Natural killer cell (primary cell): ENCODE measurements at regions of chr19 and their contacts with region 1.

Region 1: DNA sequence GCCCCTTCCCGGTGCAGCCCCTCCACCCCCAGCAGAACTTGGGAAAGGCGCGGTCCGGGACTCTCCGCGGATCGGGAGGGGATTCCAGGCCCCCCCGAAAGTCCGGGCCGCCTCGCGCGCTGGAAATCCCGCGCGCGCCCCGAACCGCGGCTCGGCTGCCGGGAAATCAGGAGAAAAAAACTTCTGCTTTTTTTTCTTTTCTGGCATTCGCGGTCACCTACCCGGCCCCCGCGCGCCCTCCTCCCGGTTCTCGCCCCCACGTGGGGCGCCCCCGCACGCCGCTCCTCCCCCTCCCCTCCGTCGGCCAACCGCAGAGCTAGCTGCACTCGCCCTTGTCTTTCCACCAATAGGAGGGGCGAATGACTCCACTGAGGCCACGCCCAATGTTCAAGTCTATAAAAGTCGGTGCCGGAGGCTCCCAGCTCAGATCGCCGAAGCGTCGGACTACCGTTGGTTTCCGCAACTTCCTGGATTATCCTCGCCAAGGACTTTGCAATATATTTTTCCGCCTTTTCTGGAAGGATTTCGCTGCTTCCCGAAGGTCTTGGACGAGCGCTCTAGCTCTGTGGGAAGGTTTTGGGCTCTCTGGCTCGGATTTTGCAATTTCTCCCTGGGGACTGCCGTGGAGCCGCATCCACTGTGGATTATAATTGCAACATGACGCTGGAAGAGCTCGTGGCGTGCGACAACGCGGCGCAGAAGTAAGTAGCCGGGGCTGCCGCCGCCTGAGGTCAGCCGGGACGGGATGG is at the start of gene GADD45B:
- DNase-seq: peak; percentile 95 to 98
- ATAC-seq: peak; percentile 59 to 81 (median 70)
- H3K4me3 ChIP-seq: peak within 1 kb of the TSS; percentile 93
- H3K4me3 Mint-ChIP-seq: peak within 1 kb of the TSS; percentile 97
- H3K27ac ChIP-seq: peak within 1 kb of the TSS; percentile 62
- H3K27ac Mint-ChIP-seq: peak within 1 kb of the TSS; percentile 96 to 98
- H3K4me1 ChIP-seq: peaks cover 48% of the 10 kb centered on the region
- H3K4me1 Mint-ChIP-seq: peaks cover 27 to 52% of the 10 kb centered on the region in 2 donors
- H3K27me3 ChIP-seq: no peaks in the 10 kb centered on the region
- H3K27me3 Mint-ChIP-seq: no peaks in the 10 kb centered on the region
- CTCF ChIP-seq: no peak
- total RNA-seq, gene GADD45B: 198 to 247 (median 212) TPM

Region 2: GRCh38 chr19:2552859-2553258 is 77.0 kb after region 1 on chr19:
- intact Hi-C with region 1: loop called (anchors 5 kb)
- DNase-seq: peak in 1 of 2 donors; percentile 87
- ATAC-seq: peak; percentile 79 to 89 (median 87)
- H3K4me3 ChIP-seq: peak overlapping the region; percentile 43
- H3K4me3 Mint-ChIP-seq: peak overlapping the region; percentile 88
- H3K27ac ChIP-seq: peak overlapping the region; percentile 80
- H3K27ac Mint-ChIP-seq: peak overlapping the region; percentile 78 to 84
- H3K4me1 ChIP-seq: peaks cover 28% of the 10 kb centered on the region
- H3K4me1 Mint-ChIP-seq: peaks cover 24 to 26% of the 10 kb centered on the region in 2 donors
- H3K27me3 ChIP-seq: no peaks in the 10 kb centered on the region
- H3K27me3 Mint-ChIP-seq: no peaks in the 10 kb centered on the region
- CTCF ChIP-seq: no peak

Region 3: GRCh38 chr19:2578901-2579677 is 103.2 kb after region 1 on chr19:
- intact Hi-C with region 1: loop called (anchors 1 kb)
- DNase-seq: peak; percentile 62 to 77
- ATAC-seq: peak in 2 of 3 donors; percentile 81 to 83
- H3K4me3 ChIP-seq: peak overlapping the region; percentile 10
- H3K4me3 Mint-ChIP-seq: peak overlapping the region; percentile 47
- H3K27ac ChIP-seq: no peak overlapping the region
- H3K27ac Mint-ChIP-seq: no peak overlapping the region
- H3K4me1 ChIP-seq: peaks cover 14% of the 10 kb centered on the region
- H3K4me1 Mint-ChIP-seq: peaks cover 0 to 6% of the 10 kb centered on the region in 2 donors
- H3K27me3 ChIP-seq: peaks cover 2% of the 10 kb centered on the region
- H3K27me3 Mint-ChIP-seq: peaks cover 0 to 6% of the 10 kb centered on the region in 2 donors
- CTCF ChIP-seq: peak; percentile 64

Region 4: DNA sequence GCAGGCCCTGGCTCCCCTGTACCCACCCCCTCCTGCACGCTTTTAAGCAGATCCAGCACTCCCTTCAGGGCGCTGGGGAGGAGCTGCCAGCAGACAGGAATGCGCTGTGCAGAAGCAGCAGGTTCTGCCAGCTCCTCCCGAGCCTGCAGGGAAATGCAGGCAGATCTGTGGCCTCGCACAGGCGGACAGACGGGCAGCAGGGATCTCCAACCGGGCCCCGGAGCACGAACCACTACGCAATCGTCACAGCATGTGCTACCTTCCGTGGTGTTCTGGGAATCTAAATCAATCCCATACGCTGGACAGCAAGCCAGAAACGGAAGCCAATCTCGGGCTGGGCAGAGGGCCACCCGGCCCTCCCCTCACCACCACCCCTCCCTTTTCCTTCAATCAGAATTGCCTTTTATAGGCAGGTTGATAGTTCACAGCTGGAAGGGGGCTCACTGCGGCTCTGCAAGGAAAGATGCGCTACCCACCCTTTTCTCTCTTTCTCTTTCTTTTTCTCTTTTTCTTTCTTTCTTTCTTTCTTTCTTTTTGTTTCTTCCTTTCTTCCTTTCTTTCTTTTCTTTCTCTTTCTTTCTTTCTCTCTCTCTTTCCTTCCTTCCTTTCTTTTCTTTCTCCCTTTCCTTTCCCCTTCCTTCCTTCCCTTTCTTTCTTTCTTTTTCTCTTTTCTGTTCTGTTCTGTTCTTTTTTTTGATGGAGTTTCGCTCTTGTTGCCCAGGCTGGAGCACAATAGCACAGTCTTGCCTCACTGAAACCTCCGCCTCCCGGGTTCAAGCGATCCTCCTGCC is 126.7 kb after region 1 on chr19:
- intact Hi-C with region 1: loop called (anchors 1 kb)
- DNase-seq: no peak
- ATAC-seq: no peak
- H3K4me3 ChIP-seq: no peak overlapping the region
- H3K4me3 Mint-ChIP-seq: no peak overlapping the region
- H3K27ac ChIP-seq: no peak overlapping the region
- H3K27ac Mint-ChIP-seq: no peak overlapping the region
- H3K4me1 ChIP-seq: peaks cover 25% of the 10 kb centered on the region
- H3K4me1 Mint-ChIP-seq: peaks cover 12 to 13% of the 10 kb centered on the region in 2 donors
- H3K27me3 ChIP-seq: no peaks in the 10 kb centered on the region
- H3K27me3 Mint-ChIP-seq: peaks cover under 1 to 3% of the 10 kb centered on the region in 2 donors
- CTCF ChIP-seq: no peak

Region 5: GRCh38 chr19:2607712-2608601 is 132.1 kb after region 1 on chr19:
- intact Hi-C with region 1: loop called (anchors 1 kb)
- DNase-seq: peak; percentile 59 to 94
- ATAC-seq: peak; percentile 62 to 76 (median 68)
- H3K4me3 ChIP-seq: no peak overlapping the region
- H3K4me3 Mint-ChIP-seq: peak overlapping the region; percentile 68
- H3K27ac ChIP-seq: no peak overlapping the region
- H3K27ac Mint-ChIP-seq: peak overlapping the region; percentile 42 to 47
- H3K4me1 ChIP-seq: peaks cover 48% of the 10 kb centered on the region
- H3K4me1 Mint-ChIP-seq: peaks cover 13 to 25% of the 10 kb centered on the region in 2 donors
- H3K27me3 ChIP-seq: no peaks in the 10 kb centered on the region
- H3K27me3 Mint-ChIP-seq: peaks cover 13 to 18% of the 10 kb centered on the region in 2 donors
- CTCF ChIP-seq: no peak

Region 6: GRCh38 chr19:2613507-2614295 is 137.8 kb after region 1 on chr19:
- intact Hi-C with region 1: loop called (anchors 1 kb)
- DNase-seq: peak; percentile 63 to 83
- ATAC-seq: peak; percentile 64 to 71 (median 67)
- H3K4me3 ChIP-seq: no peak overlapping the region
- H3K4me3 Mint-ChIP-seq: no peak overlapping the region
- H3K27ac ChIP-seq: no peak overlapping the region
- H3K27ac Mint-ChIP-seq: no peak overlapping the region
- H3K4me1 ChIP-seq: peaks cover 67% of the 10 kb centered on the region
- H3K4me1 Mint-ChIP-seq: peaks cover 25 to 38% of the 10 kb centered on the region in 2 donors
- H3K27me3 ChIP-seq: no peaks in the 10 kb centered on the region
- H3K27me3 Mint-ChIP-seq: peaks cover 7 to 10% of the 10 kb centered on the region in 2 donors
- CTCF ChIP-seq: peak; percentile 88

Region 7: GRCh38 chr19:2636897-2637683 is 161.2 kb after region 1 on chr19:
- intact Hi-C with region 1: loop called (anchors 1 kb)
- DNase-seq: peak; percentile 74 to 87
- ATAC-seq: peak; percentile 94 to 100 (median 97)
- H3K4me3 ChIP-seq: no peak overlapping the region
- H3K4me3 Mint-ChIP-seq: no peak overlapping the region
- H3K27ac ChIP-seq: no peak overlapping the region
- H3K27ac Mint-ChIP-seq: no peak overlapping the region
- H3K4me1 ChIP-seq: peaks cover 16% of the 10 kb centered on the region
- H3K4me1 Mint-ChIP-seq: peaks cover 4 to 14% of the 10 kb centered on the region in 2 donors
- H3K27me3 ChIP-seq: no peaks in the 10 kb centered on the region
- H3K27me3 Mint-ChIP-seq: peaks cover 0 to 2% of the 10 kb centered on the region in 2 donors
- CTCF ChIP-seq: peak; percentile 79